A673 (cell line): ENCODE measurements at regions of chr16 and their contacts with region 1.

Region 1: GRCh38 chr16:6165330-6165979 is 1067.9 kb upstream of the EEF2KMT start:
- DNase-seq: peak; percentile 21
- H3K4me3 ChIP-seq: no peak overlapping the region
- H3K27ac ChIP-seq: no peak overlapping the region
- H3K4me1 ChIP-seq: no peaks in the 10 kb centered on the region
- H3K27me3 ChIP-seq: no peaks in the 10 kb centered on the region
- CTCF ChIP-seq: 0 out of 2 replicates have a peak, but pooled peaks have one; percentile 23

Region 2: GRCh38 chr16:6146874-6147425 is 18.5 kb before region 1 on chr16:
- CTCF ChIA-PET with region 1: no interaction called
- POLR2A ChIA-PET with region 1: no interaction called
- intact Hi-C with region 1: no loop called
- DNase-seq: peak; percentile 14
- H3K4me3 ChIP-seq: no peak overlapping the region
- H3K27ac ChIP-seq: no peak overlapping the region
- H3K4me1 ChIP-seq: no peaks in the 10 kb centered on the region
- H3K27me3 ChIP-seq: no peaks in the 10 kb centered on the region
- CTCF ChIP-seq: peak; percentile 41

Region 3: DNA sequence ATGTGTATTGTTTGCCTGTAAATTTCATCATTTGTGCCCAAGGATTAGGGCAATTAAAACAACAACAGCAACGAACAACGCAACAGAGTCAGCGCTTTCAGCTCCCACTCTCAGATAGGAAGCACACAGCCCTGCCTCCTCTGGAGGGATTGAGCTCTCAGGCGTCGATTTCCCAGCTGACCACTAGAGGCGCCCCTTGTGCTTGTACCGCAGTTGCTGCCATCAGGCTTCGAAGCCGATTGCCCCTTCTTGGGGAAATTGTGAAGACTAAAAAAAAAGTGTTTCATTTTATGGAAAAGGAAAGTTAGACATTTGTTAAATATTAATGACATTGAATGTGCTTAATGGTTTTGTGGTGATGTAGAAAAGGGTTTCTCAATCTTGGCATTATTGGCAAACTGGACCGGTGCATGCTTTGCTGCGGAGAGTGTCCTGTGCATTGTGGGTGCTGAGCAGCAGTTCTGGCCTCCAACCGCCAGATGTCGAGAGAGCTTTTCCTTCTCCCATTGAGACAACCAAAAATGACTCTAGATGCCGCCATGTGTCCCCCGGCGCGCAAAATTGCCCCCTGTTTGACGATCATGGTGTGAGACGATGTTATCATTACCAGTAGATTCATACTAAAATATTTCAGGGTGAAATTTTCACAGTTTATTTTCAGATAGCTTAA is 516.8 kb after region 1 on chr16:
- CTCF ChIA-PET with region 1: interaction called, 10 read pairs
- POLR2A ChIA-PET with region 1: no interaction called
- intact Hi-C with region 1: no loop called
- DNase-seq: peak; percentile 64
- H3K4me3 ChIP-seq: no peak overlapping the region
- H3K27ac ChIP-seq: no peak overlapping the region
- H3K4me1 ChIP-seq: no peaks in the 10 kb centered on the region
- H3K27me3 ChIP-seq: no peaks in the 10 kb centered on the region
- CTCF ChIP-seq: peak; percentile 86